ENCODE measurements at regions of chr4 and their contacts with region 1.

Region 1: GRCh38 chr4:158671915-158672806 is at the start of gene ETFDH:
- DNase-seq: peak; percentile 97 to 100 (median 99)

Region 2: DNA sequence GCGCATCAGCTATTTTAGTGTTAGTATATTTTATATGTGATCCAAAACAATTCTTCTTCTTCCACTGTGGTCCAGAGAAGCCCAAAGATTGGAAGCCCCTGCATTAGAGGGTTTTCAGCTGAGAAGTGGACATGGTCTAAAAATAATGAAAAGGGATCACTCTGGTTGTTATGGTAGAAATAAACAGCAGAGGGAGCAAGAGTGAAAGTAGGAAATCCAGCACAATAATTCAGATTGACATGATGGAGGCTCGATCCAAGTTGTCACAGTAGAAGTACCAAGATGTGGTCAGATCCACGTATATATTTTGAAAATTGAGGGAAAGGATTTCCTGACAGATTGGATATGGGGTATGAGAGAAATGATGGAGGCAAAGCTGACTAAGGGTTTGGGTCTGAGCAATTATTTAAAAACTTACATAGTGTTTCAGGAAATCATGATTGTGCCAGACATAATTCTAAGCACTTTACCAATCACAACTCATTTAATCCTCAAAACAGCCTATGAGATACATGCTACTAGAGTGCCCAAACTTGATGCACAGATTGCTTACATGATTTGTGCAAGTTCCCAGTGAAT is 478.9 kb before region 1 on chr4:
- intact Hi-C with region 1: loop called (anchors 5 kb)
- DNase-seq: peak in 2 of 42 donors; percentile 50 to 69

Region 3: DNA sequence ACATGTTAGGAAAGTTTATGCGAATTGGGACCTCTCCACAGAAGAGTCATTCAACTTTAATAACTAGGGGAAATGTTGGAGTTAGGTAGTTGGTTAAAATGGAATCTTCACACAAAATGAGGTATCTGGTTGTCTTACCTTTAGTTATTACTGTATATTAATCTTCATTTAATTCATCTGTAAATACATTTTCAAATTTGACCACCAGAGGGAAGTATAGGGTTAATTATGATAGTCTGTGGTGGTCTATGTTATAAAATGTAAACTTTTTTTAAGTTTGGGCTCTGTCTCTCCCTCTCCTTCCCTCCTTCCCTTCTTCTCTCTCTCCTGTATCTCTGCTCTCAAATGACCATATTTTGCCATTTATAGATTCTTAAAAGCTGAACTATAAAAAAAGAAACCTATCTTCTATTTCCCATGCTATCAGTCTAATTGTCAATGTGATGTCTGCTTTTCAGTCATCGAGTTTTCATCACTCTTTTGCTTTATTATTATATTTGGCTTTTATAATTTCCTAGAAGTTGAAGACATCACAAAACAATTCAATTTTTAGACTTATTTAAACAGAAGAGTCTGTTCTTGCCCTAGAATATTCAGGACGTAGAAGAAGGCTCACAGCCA is 412.1 kb before region 1 on chr4:
- intact Hi-C with region 1: no loop called
- DNase-seq: no peak

Region 4: DNA sequence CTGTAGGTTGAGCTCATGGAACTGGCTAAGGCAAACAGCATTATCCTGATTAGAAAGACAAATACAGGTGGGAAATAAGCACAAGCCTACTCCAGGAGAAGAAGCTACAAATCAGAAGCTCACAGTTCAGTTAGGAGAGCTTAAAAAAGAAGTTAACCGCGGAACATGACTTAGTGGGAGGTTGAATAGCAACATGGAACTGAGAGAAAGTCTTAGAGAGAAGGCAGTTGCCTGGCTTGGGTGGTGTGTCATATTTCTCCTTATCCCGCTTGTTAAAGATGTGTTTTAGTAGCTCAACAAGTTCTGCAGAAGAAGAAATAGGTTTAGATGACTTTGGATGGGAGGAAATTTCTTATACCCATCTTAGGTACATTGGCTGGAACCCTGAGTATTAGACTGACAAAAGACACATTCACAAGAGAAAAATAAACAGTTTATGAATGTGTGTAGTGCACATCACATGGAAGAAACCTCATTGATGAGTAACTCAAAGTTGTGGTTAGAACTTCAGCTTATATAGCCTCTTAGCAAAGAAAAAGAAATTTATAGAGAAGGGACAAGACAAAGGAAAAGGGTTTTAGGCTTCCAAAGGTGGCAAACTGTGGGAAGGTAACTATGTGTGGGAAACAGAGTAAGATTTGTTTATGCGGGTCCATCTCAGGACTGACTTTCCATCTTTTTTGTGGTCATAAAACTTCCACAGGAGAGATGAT is 187.8 kb before region 1 on chr4:
- intact Hi-C with region 1: no loop called
- DNase-seq: no peak

Region 5: GRCh38 chr4:158590306-158590705 is 81.9 kb before region 1 on chr4:
- intact Hi-C with region 1: no loop called
- DNase-seq: no peak

Region 6: GRCh38 chr4:158704269-158704668 is 32.1 kb after region 1 on chr4:
- intact Hi-C with region 1: no loop called
- DNase-seq: no peak

Measured in head of caudate nucleus (tissue), 42 donors.